ENCODE measurements at regions of chr7 and their contacts with region 1.

Region 1: DNA sequence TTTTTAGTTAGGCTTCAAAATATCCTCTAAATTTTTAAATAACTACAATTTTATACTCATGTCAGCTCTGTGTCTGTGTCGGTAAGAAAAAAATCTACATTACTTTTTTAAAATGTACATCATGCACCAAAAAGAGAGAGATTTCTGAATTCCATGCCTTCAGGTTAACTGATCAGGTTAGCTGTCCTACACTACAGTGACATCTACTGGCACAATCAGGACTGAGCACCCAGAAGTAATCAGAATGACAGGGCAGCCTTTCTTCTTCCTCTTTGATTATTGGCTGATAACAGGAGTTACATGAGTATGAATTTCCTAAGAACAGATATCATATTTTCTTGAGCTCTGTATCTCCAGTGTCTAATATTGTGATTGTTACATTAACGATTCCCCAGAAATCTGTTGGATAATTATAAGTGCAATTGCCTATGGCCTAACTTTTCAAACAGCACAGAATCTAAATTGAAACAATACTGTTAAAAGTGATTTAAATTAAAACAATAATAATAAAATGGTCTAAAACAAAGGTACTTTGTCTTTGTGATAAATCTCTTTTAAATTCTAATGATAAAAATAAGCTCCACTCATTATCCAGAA is 41.8 kb upstream of the HYCC1 start:
- DNase-seq: peak; percentile 81
- ATAC-seq: peak; percentile 93
- H3K4me3 ChIP-seq: no peak overlapping the region
- H3K27ac ChIP-seq: no peak overlapping the region
- H3K4me1 ChIP-seq: no peaks in the 10 kb centered on the region
- H3K27me3 ChIP-seq: no peaks in the 10 kb centered on the region
- CTCF ChIP-seq: peak; percentile 95

Region 2: GRCh38 chr7:22499044-22499443 is 556.6 kb before region 1 on chr7:
- CTCF ChIA-PET with region 1: no interaction called
- POLR2A ChIA-PET with region 1: no interaction called
- intact Hi-C with region 1: no loop called
- DNase-seq: no peak
- ATAC-seq: no peak
- H3K4me3 ChIP-seq: no peak overlapping the region
- H3K27ac ChIP-seq: no peak overlapping the region
- H3K4me1 ChIP-seq: peaks cover 14% of the 10 kb centered on the region
- H3K27me3 ChIP-seq: no peaks in the 10 kb centered on the region
- CTCF ChIP-seq: no peak

Region 3: GRCh38 chr7:22732556-22733126 is 323.0 kb before region 1 on chr7:
- CTCF ChIA-PET with region 1: no interaction called
- POLR2A ChIA-PET with region 1: no interaction called
- intact Hi-C with region 1: loop called (anchors 1 kb)
- DNase-seq: peak; percentile 76
- ATAC-seq: peak; percentile 64
- H3K4me3 ChIP-seq: no peak overlapping the region
- H3K27ac ChIP-seq: peak overlapping the region; percentile 45
- H3K4me1 ChIP-seq: peaks cover 36% of the 10 kb centered on the region
- H3K27me3 ChIP-seq: no peaks in the 10 kb centered on the region
- CTCF ChIP-seq: peak; percentile 76

Region 4: GRCh38 chr7:22782616-22783232 is 273.0 kb before region 1 on chr7:
- CTCF ChIA-PET with region 1: no interaction called
- POLR2A ChIA-PET with region 1: no interaction called
- intact Hi-C with region 1: loop called (anchors 5 kb)
- DNase-seq: peak; percentile 73
- ATAC-seq: peak; percentile 95
- H3K4me3 ChIP-seq: no peak overlapping the region
- H3K27ac ChIP-seq: no peak overlapping the region
- H3K4me1 ChIP-seq: no peaks in the 10 kb centered on the region
- H3K27me3 ChIP-seq: no peaks in the 10 kb centered on the region
- CTCF ChIP-seq: peak; percentile 89

Region 5: GRCh38 chr7:22822486-22823141 is 233.1 kb before region 1 on chr7 and contains the start of gene TOMM7:
- CTCF ChIA-PET with region 1: no interaction called
- POLR2A ChIA-PET with region 1: interaction called, 8 read pairs
- intact Hi-C with region 1: loop called (anchors 2 kb)
- DNase-seq: peak; percentile 96
- ATAC-seq: peak; percentile 78
- H3K4me3 ChIP-seq: peak within 1 kb of the TSS; percentile 89
- H3K27ac ChIP-seq: peak within 1 kb of the TSS; percentile 42
- H3K4me1 ChIP-seq: peaks cover 31% of the 10 kb centered on the region
- H3K27me3 ChIP-seq: no peaks in the 10 kb centered on the region
- CTCF ChIP-seq: no peak
- total RNA-seq, gene TOMM7: 132 and 151 TPM in 2 replicates

Region 6: GRCh38 chr7:22854158-22855048 is 201.3 kb before region 1 on chr7:
- CTCF ChIA-PET with region 1: no interaction called
- POLR2A ChIA-PET with region 1: no interaction called
- intact Hi-C with region 1: loop called (anchors 1 kb)
- DNase-seq: peak; percentile 86
- ATAC-seq: peak; percentile 72
- H3K4me3 ChIP-seq: peak overlapping the region; percentile 87
- H3K27ac ChIP-seq: peak overlapping the region; percentile 79
- H3K4me1 ChIP-seq: peaks cover 38% of the 10 kb centered on the region
- H3K27me3 ChIP-seq: no peaks in the 10 kb centered on the region
- CTCF ChIP-seq: no peak

Region 7: DNA sequence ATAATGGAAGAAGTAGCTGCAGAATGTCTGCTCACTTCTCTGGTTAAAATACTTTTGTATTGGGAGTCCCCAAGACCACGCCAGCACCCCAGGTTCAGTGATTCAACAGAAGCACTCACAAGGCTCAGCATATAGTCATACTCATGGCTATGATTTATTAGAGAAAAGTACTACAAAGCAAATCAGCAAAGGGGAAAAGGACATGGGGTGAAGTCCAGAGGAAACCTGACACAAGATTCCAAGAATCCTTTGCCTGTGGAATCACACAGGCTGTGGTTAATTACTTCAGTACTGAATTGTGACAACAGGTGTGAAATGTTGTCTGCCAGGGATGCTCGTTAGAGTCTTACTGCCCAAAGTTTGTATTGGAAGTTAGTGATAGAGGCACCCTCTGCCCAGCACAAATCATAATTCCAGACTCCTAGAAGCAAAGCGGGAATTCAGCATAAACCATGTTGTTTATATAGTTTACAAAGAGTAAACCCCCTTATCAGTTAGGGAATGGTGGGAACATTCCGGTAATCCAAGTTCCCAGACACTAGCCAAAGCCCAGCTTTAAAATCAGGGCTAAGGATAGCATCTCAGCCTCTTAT is 121.1 kb before region 1 on chr7:
- CTCF ChIA-PET with region 1: no interaction called
- POLR2A ChIA-PET with region 1: no interaction called
- intact Hi-C with region 1: loop called (anchors 1 kb)
- DNase-seq: no peak
- ATAC-seq: no peak
- H3K4me3 ChIP-seq: no peak overlapping the region
- H3K27ac ChIP-seq: no peak overlapping the region
- H3K4me1 ChIP-seq: no peaks in the 10 kb centered on the region
- H3K27me3 ChIP-seq: no peaks in the 10 kb centered on the region
- CTCF ChIP-seq: no peak

Region 8: GRCh38 chr7:23013715-23014649 is 41.7 kb before region 1 on chr7 and contains the start of gene HYCC1:
- CTCF ChIA-PET with region 1: no interaction called
- POLR2A ChIA-PET with region 1: interaction called, 3 read pairs
- intact Hi-C with region 1: loop called (anchors 1 kb)
- DNase-seq: peak; percentile 98
- ATAC-seq: peak; percentile 98
- H3K4me3 ChIP-seq: peak within 1 kb of the TSS; percentile 88
- H3K27ac ChIP-seq: no peak within 1 kb of the TSS
- H3K4me1 ChIP-seq: peaks cover 21% of the 10 kb centered on the region
- H3K27me3 ChIP-seq: no peaks in the 10 kb centered on the region
- CTCF ChIP-seq: peak; percentile 57
- total RNA-seq, gene HYCC1: 15.0 and 15.5 TPM in 2 replicates